ENCODE measurements at regions of chr2 and their contacts with region 1.

Region 1: GRCh38 chr2:71857636-71858035 is 290.0 kb downstream of the CYP26B1 start:
- DNase-seq: no peak
- H3K4me3 ChIP-seq: no peak overlapping the region
- H3K27ac ChIP-seq: no peak overlapping the region
- H3K4me1 ChIP-seq: no peaks in the 10 kb centered on the region
- CTCF ChIP-seq: no peak

Region 2: DNA sequence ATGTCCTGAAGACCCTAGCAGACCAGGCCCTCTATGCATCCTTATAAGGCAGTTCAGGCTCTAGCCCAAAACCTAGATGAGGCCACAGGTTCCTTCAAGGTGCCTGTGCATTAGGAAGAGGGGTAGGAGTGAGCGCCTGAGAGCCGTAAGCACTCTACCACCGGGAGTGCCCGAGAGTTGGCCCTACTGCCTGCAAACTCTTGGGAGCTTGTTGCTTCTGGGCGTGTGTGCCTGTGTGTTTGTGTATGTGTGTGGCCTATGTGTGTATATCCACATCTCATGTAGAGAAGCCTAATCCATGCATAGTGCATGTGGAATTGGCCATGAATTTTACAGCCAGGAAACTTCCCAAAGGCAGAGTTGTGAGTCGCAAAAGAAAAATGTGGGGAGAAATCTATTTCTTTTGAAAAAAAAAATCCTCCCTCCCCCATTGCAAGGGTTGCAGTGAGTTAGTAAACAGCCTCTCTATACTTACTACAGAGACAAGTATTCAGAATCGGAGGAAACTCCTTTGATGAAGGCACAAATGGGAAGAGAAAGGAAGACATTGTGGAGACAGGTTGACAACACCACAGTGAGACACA is 1186.5 kb before region 1 on chr2:
- CTCF ChIA-PET with region 1: no interaction called
- POLR2A ChIA-PET with region 1: no interaction called
- intact Hi-C with region 1: no loop called
- DNase-seq: no peak
- H3K4me3 ChIP-seq: no peak overlapping the region
- H3K27ac ChIP-seq: no peak overlapping the region
- H3K4me1 ChIP-seq: no peaks in the 10 kb centered on the region
- CTCF ChIP-seq: no peak

Region 3: DNA sequence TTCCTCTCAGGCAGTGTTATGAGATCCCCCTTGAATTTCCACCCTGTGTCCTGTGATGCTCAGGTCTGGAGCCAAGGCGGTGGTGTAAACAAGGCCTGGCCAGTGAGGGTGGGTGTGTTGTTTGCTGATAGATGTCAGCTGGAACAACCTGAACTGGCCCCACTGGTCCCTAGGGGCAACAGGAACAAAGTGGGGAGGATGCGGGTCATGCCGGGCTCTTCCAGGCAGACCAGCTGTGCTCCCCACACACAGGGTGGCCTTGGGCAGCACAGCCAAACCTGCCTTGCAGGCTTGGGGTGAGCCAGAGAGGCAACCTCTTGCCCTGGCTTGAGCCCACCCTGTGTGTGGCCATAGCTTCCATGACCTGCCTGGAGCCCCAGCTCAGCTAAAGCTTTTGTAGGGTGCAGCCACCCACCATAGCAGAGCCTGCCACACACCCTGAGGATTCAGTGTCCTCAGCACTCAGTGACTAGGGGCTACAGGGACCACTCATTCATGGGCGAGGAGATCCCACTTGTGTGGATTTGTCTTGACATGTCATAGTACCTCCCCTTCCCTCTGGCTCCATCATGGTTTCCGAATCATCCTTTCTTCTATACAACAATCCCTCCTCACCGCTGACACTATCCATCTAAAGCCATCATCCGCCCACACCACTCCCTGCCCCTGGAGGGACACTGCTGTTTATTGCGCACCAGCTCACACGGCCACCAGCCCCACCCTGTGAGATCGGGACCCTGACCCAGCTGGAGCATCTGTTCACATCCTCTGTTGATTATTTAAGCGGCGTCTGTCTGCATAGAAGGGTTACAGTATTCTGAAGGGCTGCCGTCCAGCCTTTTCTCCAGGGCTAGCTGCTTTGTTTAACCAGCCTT is 21.2 kb after region 1 on chr2:
- CTCF ChIA-PET with region 1: interaction called, 17 read pairs
- POLR2A ChIA-PET with region 1: no interaction called
- intact Hi-C with region 1: no loop called
- DNase-seq: no peak
- H3K4me3 ChIP-seq: no peak overlapping the region
- H3K27ac ChIP-seq: no peak overlapping the region
- H3K4me1 ChIP-seq: no peaks in the 10 kb centered on the region
- CTCF ChIP-seq: no peak

Measured in OCI-LY7 (cell line).